ENCODE measurements at regions of chr1 and their contacts with region 1.

Region 1: DNA sequence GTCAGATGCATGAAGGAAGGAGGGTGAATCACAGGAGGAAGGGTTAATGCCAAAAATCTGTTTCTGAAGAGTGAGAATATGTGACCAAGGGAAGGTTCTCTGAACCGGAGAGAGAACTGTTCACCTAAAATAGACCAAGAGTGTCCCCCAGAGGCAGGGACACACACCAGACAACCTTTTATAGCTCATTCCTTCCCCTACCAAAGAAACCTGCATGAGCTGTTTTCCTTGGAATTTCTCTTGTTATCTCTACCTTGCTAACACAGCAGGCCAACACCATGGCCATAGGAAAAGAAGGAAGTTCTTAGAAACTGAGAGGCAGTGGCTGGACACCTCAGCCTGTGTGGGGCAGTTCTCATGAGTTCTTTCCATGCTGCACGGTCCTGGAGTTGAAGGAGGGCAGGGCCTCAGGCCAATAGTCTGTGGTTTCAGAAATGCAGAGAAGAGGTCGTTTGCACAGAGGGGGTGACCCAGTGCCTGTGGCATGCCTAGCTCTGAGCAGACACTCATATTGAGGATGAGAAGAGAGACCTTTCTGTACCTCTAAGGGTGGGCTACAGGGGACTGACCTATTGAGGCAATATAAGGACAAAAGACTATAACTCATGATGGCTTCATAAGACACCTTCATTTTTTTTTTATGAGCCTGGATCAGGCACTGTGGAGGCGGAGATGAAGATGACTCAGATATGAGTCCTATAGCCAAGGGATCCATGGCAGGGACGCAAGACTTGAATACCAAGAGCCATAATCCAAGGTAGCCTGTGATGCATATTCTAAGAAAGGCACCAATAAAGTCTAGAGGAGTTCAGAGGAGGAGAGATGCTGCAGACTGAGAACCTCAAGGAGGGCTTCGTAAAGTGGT is 39.4 kb downstream of the IGFN1 start:
- DNase-seq: no peak
- ATAC-seq: no peak
- H3K4me3 ChIP-seq: no peak overlapping the region
- H3K27ac ChIP-seq: no peak overlapping the region
- H3K4me1 ChIP-seq: no peaks in the 10 kb centered on the region
- H3K27me3 ChIP-seq: no peaks in the 10 kb centered on the region
- CTCF ChIP-seq: no peak
- POLR2A ChIP-seq: no peak

Region 2: GRCh38 chr1:200971955-200972711 is 257.9 kb before region 1 on chr1:
- intact Hi-C with region 1: loop called (anchors 10 kb)
- DNase-seq: peak; percentile 67 to 76 (median 71)
- ATAC-seq: peak; percentile 44
- H3K4me3 ChIP-seq: no peak overlapping the region
- H3K27ac ChIP-seq: no peak overlapping the region
- H3K4me1 ChIP-seq: peaks cover 4% of the 10 kb centered on the region
- H3K27me3 ChIP-seq: no peaks in the 10 kb centered on the region
- CTCF ChIP-seq: peak; percentile 61 to 93 (median 78)
- POLR2A ChIP-seq: no peak

Region 3: GRCh38 chr1:201042779-201043461 is 187.1 kb before region 1 on chr1:
- intact Hi-C with region 1: no loop called
- DNase-seq: peak; percentile 66 to 76 (median 74)
- ATAC-seq: peak; percentile 86
- H3K4me3 ChIP-seq: no peak overlapping the region
- H3K27ac ChIP-seq: no peak overlapping the region
- H3K4me1 ChIP-seq: no peaks in the 10 kb centered on the region
- H3K27me3 ChIP-seq: no peaks in the 10 kb centered on the region
- CTCF ChIP-seq: peak; percentile 66 to 90 (median 79)
- POLR2A ChIP-seq: no peak

Region 4: DNA sequence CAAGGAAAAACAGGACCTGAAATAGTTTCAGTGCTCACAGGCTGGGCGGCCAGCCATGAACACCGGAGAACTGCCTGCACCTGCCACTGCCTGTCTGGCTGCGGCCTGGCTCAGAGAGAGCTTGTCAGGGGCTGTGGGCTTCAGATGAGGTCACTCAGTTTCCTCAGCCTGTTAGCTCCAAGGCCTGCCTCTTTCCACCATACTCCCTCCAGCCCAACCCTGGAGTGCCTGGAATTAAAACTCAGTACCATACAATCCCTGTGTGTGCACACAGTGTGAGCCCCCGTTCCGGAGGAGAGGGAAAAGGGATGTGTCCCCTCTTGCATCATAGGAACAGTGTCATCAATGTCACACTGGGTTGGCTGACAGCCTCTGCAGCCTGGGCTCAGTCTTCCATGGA is 134.0 kb before region 1 on chr1:
- intact Hi-C with region 1: loop called (anchors 10 kb)
- DNase-seq: no peak
- ATAC-seq: no peak
- H3K4me3 ChIP-seq: no peak overlapping the region
- H3K27ac ChIP-seq: no peak overlapping the region
- H3K4me1 ChIP-seq: no peaks in the 10 kb centered on the region
- H3K27me3 ChIP-seq: no peaks in the 10 kb centered on the region
- CTCF ChIP-seq: no peak
- POLR2A ChIP-seq: no peak

Region 5: DNA sequence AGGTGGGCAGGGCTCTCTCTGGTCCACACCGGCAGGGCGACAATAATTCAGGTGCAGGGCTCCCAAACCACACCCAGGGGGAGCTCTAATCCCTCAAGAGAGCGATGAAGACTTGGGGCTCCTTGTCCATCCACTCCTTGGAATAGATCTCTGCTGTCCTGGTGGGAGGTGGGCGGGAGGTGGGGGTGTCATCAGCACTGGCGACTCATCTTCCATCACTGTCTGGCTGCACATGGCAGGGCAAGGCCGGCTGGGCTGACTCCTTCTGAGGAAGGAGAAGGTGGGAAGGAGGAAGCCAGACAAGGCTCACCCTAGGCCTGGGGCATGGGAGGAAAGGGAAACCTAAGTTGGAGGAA is 118.2 kb after region 1 on chr1:
- intact Hi-C with region 1: no loop called
- DNase-seq: peak; percentile 39 to 53 (median 46)
- ATAC-seq: peak; percentile 70
- H3K4me3 ChIP-seq: no peak overlapping the region
- H3K27ac ChIP-seq: no peak overlapping the region
- H3K4me1 ChIP-seq: no peaks in the 10 kb centered on the region
- H3K27me3 ChIP-seq: no peaks in the 10 kb centered on the region
- CTCF ChIP-seq: peak; percentile 45 to 66 (median 56)
- POLR2A ChIP-seq: no peak

Measured in body of pancreas (tissue), 4 donors.